ENCODE measurements at regions of chr12 and their contacts with region 1.

Region 1: GRCh38 chr12:113366827-113367226 is 8.4 kb downstream of the PLBD2 start:
- DNase-seq: peak in 3 of 7 donors; percentile 16 to 42 (median 39)
- H3K4me3 ChIP-seq: no peak overlapping the region
- H3K27ac ChIP-seq: peak overlapping the region in 4 of 5 donors; percentile 30 to 59 (median 54)
- H3K4me1 ChIP-seq: peaks cover 45 to 62% of the 10 kb centered on the region in 2 donors
- H3K27me3 ChIP-seq: no peaks in the 10 kb centered on the region
- CTCF ChIP-seq: no peak
- POLR2A ChIP-seq: no peak

Region 2: GRCh38 chr12:113316155-113316554 is 50.7 kb before region 1 on chr12:
- intact Hi-C with region 1: loop called in 1 of 2 experiments (anchors 5 kb)
- DNase-seq: no peak
- H3K4me3 ChIP-seq: no peak overlapping the region
- H3K27ac ChIP-seq: no peak overlapping the region
- H3K4me1 ChIP-seq: no peaks in the 10 kb centered on the region
- H3K27me3 ChIP-seq: no peaks in the 10 kb centered on the region
- CTCF ChIP-seq: peak in 1 of 6 experiments; percentile 4
- POLR2A ChIP-seq: no peak

Measured in adrenal gland (tissue), 19 donors.